HAP-1 (cell line): ENCODE measurements at regions of chr9 and their contacts with region 1.

Region 1: GRCh38 chr9:94076557-94076956 is 7.7 kb upstream of the PTPDC1 start:
- DNase-seq: no peak
- H3K4me3 ChIP-seq: no peak overlapping the region
- H3K4me1 ChIP-seq: no peaks in the 10 kb centered on the region
- H3K27me3 ChIP-seq: no peaks in the 10 kb centered on the region

Region 2: GRCh38 chr9:93486269-93486668 is 590.3 kb before region 1 on chr9:
- in situ Hi-C with region 1: no loop called
- DNase-seq: no peak
- H3K4me3 ChIP-seq: no peak overlapping the region
- H3K4me1 ChIP-seq: no peaks in the 10 kb centered on the region
- H3K27me3 ChIP-seq: no peaks in the 10 kb centered on the region

Region 3: GRCh38 chr9:93930070-93930469 is 146.5 kb before region 1 on chr9:
- in situ Hi-C with region 1: no loop called
- DNase-seq: no peak
- H3K4me3 ChIP-seq: no peak overlapping the region
- H3K4me1 ChIP-seq: no peaks in the 10 kb centered on the region
- H3K27me3 ChIP-seq: peaks cover 6% of the 10 kb centered on the region; the same call in 1 of the 2 replicates

Region 4: GRCh38 chr9:94139672-94140417 is 63.3 kb after region 1 on chr9:
- in situ Hi-C with region 1: no loop called
- DNase-seq: no peak
- H3K4me3 ChIP-seq: no peak overlapping the region
- H3K4me1 ChIP-seq: no peaks in the 10 kb centered on the region
- H3K27me3 ChIP-seq: no peaks in the 10 kb centered on the region; the same call in 1 of the 2 replicates

Region 5: GRCh38 chr9:94213511-94214124 is 137.1 kb after region 1 on chr9:
- in situ Hi-C with region 1: loop called (anchors 10 kb)
- DNase-seq: peak; percentile 77 to 78
- H3K4me3 ChIP-seq: no peak overlapping the region
- H3K4me1 ChIP-seq: no peaks in the 10 kb centered on the region
- H3K27me3 ChIP-seq: no peaks in the 10 kb centered on the region

Region 6: GRCh38 chr9:94289691-94290090 is 213.1 kb after region 1 on chr9:
- in situ Hi-C with region 1: no loop called
- DNase-seq: no peak
- H3K4me3 ChIP-seq: no peak overlapping the region
- H3K4me1 ChIP-seq: no peaks in the 10 kb centered on the region
- H3K27me3 ChIP-seq: no peaks in the 10 kb centered on the region